OCI-LY7 (cell line): ENCODE measurements at regions of chr7 and their contacts with region 1.

Region 1: DNA sequence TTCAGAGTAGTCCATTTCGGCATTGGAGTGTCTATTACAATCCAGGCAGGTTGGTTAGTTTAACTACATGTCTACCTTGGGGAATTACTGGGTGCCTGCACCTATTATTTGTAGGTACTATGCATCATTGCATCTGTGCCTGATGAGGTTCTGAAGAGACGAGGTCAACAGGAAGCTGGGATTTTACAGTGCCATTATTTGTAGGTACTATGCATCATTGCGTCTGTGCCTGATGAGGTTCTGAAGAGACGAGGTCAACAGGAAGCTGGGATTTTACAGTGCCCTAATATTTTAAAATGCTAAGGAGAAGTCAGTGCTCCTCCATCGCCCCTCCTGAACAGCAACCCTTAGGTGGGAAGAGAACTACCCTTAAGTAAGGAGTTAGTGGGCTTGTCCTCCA is 41.7 kb downstream of the NPY start:
- DNase-seq: peak; percentile 93
- H3K4me3 ChIP-seq: peak overlapping the region; percentile 42
- H3K27ac ChIP-seq: peak overlapping the region; percentile 89
- H3K4me1 ChIP-seq: peaks cover 81% of the 10 kb centered on the region
- CTCF ChIP-seq: no peak

Region 2: GRCh38 chr7:24336461-24336860 is 10.8 kb after region 1 on chr7:
- CTCF ChIA-PET with region 1: interaction called, 3 read pairs
- POLR2A ChIA-PET with region 1: interaction called, 11 read pairs
- intact Hi-C with region 1: no loop called
- DNase-seq: no peak
- H3K4me3 ChIP-seq: no peak overlapping the region
- H3K27ac ChIP-seq: no peak overlapping the region
- H3K4me1 ChIP-seq: peaks cover 14% of the 10 kb centered on the region
- CTCF ChIP-seq: no peak

Region 3: GRCh38 chr7:25139536-25139935 is 813.8 kb after region 1 on chr7:
- CTCF ChIA-PET with region 1: no interaction called
- POLR2A ChIA-PET with region 1: no interaction called
- intact Hi-C with region 1: no loop called
- DNase-seq: no peak
- H3K4me3 ChIP-seq: no peak overlapping the region
- H3K27ac ChIP-seq: no peak overlapping the region
- H3K4me1 ChIP-seq: no peaks in the 10 kb centered on the region
- CTCF ChIP-seq: no peak